Activated T-helper 1 cell treated with anti-CD3 and anti-CD28 coated beads, Interleukin-12 subunit alpha, Interleukin-12 subunit beta, Interleukin-2, Interleukin-4 antibody, amounts not matched to agents 30 ng/mL and 10 ng/mL and 1 ng/mL, durations not matched to agents 14 hours and 24 hours and 36 hours (primary cell): ENCODE measurements at regions of chr10 and their contacts with region 1.

Region 1: GRCh38 chr10:97640174-97640867 is at the start of gene PI4K2A:
- DNase-seq: peak; percentile 99
- H3K4me3 Mint-ChIP-seq: peak within 1 kb of the TSS; percentile 96
- H3K27ac Mint-ChIP-seq: peak within 1 kb of the TSS; percentile 86
- H3K4me1 Mint-ChIP-seq: peaks cover 23% of the 10 kb centered on the region
- H3K27me3 Mint-ChIP-seq: peaks cover 1% of the 10 kb centered on the region
- total RNA-seq, gene PI4K2A: 19.3 and 19.7 TPM in 2 replicates

Region 2: DNA sequence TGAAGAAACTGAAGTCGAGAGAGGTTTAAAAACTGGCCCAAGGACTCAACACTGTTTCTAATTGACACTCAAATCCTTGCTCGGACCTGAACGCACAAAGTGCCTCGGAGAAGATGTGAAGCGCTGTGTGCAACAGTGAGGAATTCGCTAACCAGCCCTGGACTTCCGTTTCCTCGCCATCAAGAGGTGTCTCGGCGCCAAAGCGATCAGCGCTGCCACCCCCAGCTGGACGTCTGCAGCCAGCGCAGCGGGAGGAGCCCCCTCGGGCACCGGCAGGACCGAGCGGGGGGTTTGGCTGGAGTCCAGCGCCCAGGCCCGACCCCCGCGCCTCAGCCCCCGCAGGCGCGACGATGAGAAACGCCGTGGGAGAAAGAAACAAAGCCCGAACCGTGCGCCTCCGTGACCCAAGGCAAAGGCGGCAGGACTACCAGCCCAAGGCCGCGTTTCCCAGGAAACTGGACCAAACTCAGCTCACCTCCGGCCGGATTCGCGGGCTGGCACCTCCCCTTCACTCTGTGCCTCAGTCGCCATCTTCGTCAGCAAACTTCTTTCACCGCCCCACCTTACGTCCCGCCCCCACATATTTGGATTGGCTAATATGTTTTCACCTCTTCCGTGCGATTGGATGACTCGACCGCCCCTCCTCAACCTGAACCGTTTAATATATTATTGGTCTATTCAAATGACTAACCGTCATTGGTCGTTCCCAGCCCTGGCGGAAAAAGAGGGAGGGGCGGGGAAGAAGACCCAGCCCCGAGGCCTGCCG is 348.0 kb before region 1 on chr10 and contains the start of gene ARHGAP19:
- intact Hi-C with region 1: loop called (anchors 1 kb)
- DNase-seq: peak; percentile 92
- H3K4me3 Mint-ChIP-seq: peak within 1 kb of the TSS; percentile 91
- H3K27ac Mint-ChIP-seq: peak within 1 kb of the TSS; percentile 92
- H3K4me1 Mint-ChIP-seq: peaks cover 22% of the 10 kb centered on the region
- H3K27me3 Mint-ChIP-seq: peaks cover 3% of the 10 kb centered on the region
- total RNA-seq, gene ARHGAP19: 27.1 and 27.8 TPM in 2 replicates

Region 3: GRCh38 chr10:97318772-97319651 is 321.3 kb before region 1 on chr10 and contains the start of gene FRAT1:
- intact Hi-C with region 1: loop called (anchors 5 kb)
- DNase-seq: peak; percentile 86
- H3K4me3 Mint-ChIP-seq: peak within 1 kb of the TSS; percentile 87
- H3K27ac Mint-ChIP-seq: peak within 1 kb of the TSS; percentile 97
- H3K4me1 Mint-ChIP-seq: peaks cover 26% of the 10 kb centered on the region
- H3K27me3 Mint-ChIP-seq: peaks cover 24% of the 10 kb centered on the region
- total RNA-seq, gene FRAT1: 3.0 and 3.3 TPM in 2 replicates

Region 4: DNA sequence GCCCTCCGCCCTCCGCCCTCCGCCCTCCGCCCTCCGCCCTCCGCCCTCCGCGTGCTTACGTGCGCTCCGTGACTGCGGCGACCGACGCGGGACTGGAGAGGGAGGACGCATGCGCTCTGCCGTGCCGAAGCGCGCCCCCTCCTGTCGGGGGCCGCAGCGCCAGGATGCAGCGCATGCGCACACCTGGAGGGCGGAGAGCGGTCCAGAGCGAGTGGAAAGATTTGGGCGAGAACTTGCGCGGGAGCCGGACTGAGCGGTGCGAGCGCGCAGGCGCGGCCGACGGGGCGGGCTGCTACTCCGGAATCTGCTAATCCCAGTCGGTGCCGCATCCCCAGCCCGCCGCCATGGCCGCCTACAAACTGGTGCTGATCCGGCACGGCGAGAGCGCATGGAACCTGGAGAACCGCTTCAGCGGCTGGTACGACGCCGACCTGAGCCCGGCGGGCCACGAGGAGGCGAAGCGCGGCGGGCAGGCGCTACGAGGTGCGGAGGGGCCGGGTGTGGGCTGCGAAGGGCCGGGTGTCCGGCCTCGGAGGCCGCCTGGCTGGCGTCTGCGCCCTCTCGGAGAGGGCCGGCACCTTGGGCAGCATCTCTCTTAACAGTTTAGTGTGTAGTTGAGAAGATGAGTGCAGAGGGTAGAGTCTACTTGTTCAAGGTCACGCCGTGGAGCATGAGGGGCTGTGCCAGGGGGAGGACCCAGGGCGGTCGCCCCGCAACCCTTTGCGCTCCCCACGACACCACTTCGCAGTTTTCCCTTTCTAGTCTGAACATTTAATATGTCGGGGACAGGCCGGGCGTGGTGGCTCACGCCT is 214.2 kb before region 1 on chr10 and contains the start of gene PGAM1:
- intact Hi-C with region 1: loop called (anchors 2 kb)
- DNase-seq: peak; percentile 98
- H3K4me3 Mint-ChIP-seq: peak within 1 kb of the TSS; percentile 94
- H3K27ac Mint-ChIP-seq: peak within 1 kb of the TSS; percentile 99
- H3K4me1 Mint-ChIP-seq: peaks cover 46% of the 10 kb centered on the region
- H3K27me3 Mint-ChIP-seq: peaks cover 2% of the 10 kb centered on the region
- total RNA-seq, gene PGAM1: 967 and 979 TPM in 2 replicates

Region 5: DNA sequence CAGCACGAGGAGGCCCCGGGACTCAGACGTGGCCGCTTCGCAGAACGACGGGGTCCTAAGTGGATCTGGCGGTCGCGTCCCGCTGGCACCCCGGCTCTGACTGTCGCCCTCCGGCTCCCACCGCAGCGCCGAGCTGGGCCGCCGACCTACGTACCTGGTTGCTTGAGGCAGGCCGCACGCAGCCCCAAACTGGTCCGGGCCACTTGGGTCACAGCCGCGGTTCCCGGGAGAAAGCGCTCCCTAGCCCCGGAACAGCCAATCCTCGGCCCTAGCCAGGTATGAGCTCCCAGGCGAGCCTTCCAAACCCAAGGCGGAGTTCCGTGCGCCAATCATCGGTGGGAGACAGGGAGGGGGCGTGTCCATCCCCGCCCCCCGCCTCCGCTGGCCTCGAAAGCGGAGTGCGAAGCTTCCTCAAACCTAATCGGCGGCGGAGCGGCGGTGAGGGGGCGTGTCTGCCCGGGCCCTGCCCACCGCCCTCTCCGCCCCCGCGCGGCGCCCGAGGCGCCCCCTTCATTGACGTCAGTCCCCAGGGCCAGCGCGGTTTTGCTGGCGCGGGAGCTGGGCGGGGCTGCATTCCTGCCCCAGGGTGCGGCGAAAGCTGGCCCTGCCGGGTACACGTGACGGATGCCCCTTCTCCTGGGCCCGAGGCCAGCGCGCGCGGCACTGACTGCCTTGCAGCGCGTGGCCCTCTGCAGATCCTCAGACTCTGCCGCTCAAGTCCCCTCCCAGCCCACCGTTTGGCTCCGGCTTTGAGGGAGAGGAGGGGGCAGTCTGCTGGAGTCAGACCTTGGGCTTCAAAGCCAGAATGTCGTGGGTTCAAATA is 46.9 kb after region 1 on chr10 and contains the start of gene AVPI1:
- intact Hi-C with region 1: loop called (anchors 2 kb)
- DNase-seq: peak; percentile 92
- H3K4me3 Mint-ChIP-seq: peak within 1 kb of the TSS; percentile 78
- H3K27ac Mint-ChIP-seq: peak within 1 kb of the TSS; percentile 68
- H3K4me1 Mint-ChIP-seq: peaks cover 14% of the 10 kb centered on the region
- H3K27me3 Mint-ChIP-seq: peaks cover 14% of the 10 kb centered on the region
- total RNA-seq, gene AVPI1: 0.66 and 0.93 TPM in 2 replicates